Posterior cingulate gyrus (tissue), 11 donors: ENCODE measurements at regions of chr16 and their contacts with region 1.

Region 1: DNA sequence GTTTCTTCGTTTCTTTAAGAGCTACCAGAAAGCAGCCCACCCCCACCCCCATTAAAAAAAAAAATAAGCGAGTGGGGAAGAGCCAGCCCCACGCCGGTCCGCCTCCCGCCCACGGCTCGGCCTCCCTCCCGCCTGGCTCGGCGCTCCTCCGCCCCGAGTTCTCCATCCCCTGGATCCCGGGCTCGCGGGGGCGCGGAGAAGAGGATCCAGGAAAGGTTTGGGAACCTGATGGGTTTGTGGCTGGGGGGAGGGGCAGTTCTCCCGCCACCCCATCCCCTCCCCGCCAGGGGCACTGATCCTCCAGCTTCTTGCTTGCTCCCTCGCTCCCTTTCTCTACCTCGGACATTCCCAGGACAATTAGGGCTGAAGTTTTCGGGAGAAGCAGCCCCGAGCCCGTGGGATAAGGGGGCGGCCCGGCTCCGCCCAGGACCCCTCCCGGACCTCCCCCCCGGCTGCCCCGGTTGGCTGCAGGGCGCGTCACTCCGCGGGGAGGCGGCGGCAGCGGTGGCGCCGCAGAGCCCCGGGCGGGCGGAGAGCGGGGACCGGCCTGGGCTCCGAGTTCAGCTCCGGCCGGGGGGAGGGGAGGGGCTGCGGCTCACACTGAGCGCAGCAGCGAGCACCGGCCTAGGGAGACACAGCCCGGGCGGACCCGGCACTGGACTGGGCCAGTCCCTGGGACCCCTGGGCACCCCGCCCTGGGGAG is 1.0 kb upstream of the SALL1 start:
- DNase-seq: peak; percentile 82 to 99 (median 89)

Region 2: DNA sequence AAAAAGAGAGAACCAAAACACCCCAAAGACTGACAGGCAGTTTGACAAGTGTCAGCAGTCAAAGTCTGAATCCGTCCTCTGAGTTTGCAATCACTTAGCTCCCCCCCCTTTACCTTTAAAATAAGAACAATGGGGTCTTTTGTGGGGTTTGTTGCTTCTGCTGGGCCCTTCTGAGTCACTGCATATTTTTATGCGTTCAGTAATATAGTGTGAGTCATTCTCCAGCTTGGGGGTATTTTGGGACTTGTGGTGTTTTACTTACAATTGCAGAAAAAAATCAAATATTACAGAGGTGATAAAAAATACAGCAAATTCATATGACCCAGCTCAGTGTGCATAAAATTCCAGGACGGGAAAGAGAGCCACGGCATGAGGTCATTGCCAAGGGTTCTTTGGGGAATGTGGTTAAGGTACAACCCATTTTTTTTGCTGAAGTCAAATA is 290.1 kb before region 1 on chr16:
- intact Hi-C with region 1: loop called (anchors 5 kb)
- DNase-seq: no peak

Region 3: GRCh38 chr16:50996830-50997186 is 155.3 kb before region 1 on chr16:
- intact Hi-C with region 1: no loop called
- DNase-seq: no peak

Region 4: GRCh38 chr16:51359141-51359955 is 207.2 kb after region 1 on chr16:
- intact Hi-C with region 1: loop called (anchors 10 kb)
- DNase-seq: peak; percentile 48 to 95 (median 74)

Region 5: GRCh38 chr16:51440131-51440889 is 288.2 kb after region 1 on chr16:
- intact Hi-C with region 1: loop called (anchors 5 kb)
- DNase-seq: peak in 3 of 10 donors; percentile 3 to 34 (median 27)

Region 6: GRCh38 chr16:51524555-51525373 is 372.7 kb after region 1 on chr16:
- intact Hi-C with region 1: loop called (anchors 10 kb)
- DNase-seq: peak in 8 of 10 donors; percentile 13 to 91 (median 43)